Activated CD4-positive, alpha-beta T cell treated with anti-CD3 and anti-CD28 coated beads, Interleukin-2, amount 10 ng/mL, durations not matched to agents 24 days and 14 days (primary cell): ENCODE measurements at regions of chr20 and their contacts with region 1.

Region 1: GRCh38 chr20:49915378-49916145 is at the start of gene SPATA2:
- DNase-seq: peak; percentile 97
- H3K4me3 Mint-ChIP-seq: peak within 1 kb of the TSS; percentile 96
- H3K27ac Mint-ChIP-seq: peak within 1 kb of the TSS; percentile 100
- H3K4me1 Mint-ChIP-seq: peaks cover 23% of the 10 kb centered on the region
- H3K27me3 Mint-ChIP-seq: no peaks in the 10 kb centered on the region
- total RNA-seq, gene SPATA2: 8.8 and 9.9 TPM in 2 replicates

Region 2: DNA sequence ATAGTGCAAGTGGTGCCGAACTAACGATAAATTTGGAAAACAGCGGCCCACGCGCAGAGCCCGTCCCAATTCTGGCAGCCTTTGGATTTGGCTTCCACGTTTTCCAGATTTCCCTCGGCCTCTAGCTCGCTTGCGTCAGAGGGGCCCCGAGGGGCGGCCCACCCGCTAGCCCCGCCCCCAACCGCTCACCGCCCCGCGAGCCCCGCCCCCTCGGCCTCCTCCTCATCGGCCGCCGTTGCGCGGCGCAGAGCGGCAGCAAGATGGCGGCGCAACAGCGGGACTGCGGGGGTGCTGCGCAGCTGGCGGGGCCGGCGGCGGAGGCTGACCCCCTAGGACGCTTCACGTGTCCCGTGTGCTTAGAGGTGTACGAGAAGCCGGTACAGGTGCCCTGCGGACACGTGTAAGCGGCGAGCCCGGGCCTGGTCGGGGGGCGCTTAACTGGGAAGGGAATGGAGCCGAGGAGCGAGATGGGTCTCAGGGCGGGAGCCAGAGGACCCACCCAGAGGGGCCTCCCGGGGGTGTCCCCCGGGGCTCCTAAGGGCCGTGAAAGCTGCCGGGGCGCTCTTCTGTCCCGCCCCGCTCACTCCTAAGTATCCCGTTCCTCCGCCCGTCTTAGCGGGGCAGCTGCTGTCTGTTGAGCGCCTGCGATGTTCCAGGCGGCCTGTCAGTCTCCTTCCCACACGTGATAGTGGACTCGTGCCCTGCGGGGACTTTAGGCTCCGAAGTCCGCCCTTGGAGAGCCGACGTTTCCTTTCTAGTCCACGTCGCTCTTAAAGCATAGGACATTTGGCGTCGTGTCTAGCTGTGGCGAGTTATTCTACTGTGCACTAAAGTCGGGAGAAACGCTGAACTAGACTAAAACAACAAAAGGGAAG is 20.8 kb after region 1 on chr20 and contains the start of gene RNF114:
- intact Hi-C with region 1: loop called (anchors 2 kb)
- DNase-seq: peak; percentile 95
- H3K4me3 Mint-ChIP-seq: peak within 1 kb of the TSS; percentile 94
- H3K27ac Mint-ChIP-seq: peak within 1 kb of the TSS; percentile 88
- H3K4me1 Mint-ChIP-seq: peaks cover 40% of the 10 kb centered on the region
- H3K27me3 Mint-ChIP-seq: no peaks in the 10 kb centered on the region
- total RNA-seq, gene RNF114: 60.1 and 69.3 TPM in 2 replicates

Region 3: GRCh38 chr20:50012282-50013263 is 97.0 kb after region 1 on chr20:
- intact Hi-C with region 1: no loop called
- DNase-seq: no peak
- H3K4me3 Mint-ChIP-seq: no peak overlapping the region
- H3K27ac Mint-ChIP-seq: no peak overlapping the region
- H3K4me1 Mint-ChIP-seq: peaks cover 7% of the 10 kb centered on the region
- H3K27me3 Mint-ChIP-seq: peaks cover 5% of the 10 kb centered on the region